Transverse colon (tissue), 4 donors: ENCODE measurements at regions of chr19 and their contacts with region 1.

Region 1: DNA sequence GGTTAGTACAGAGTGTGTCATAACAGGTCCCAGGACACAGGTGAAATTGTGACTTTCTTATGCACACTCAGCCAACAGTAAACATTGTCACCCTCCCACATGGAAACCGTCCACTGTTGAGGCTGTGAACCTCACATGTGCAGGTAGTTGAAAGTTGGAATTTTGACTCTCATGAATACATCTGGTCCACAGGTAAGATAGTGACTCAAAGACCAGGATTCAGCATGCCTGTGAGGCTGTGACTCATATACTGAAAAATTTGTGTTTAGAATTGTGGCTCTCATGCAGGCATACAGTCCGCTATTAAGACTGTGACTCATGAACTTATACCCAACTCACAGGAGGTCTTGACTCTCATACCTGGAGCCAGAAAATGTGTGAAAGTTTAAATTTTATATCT is 67.8 kb downstream of the ZNF728 start:
- DNase-seq: no peak
- H3K4me3 ChIP-seq: no peak overlapping the region
- H3K27ac ChIP-seq: no peak overlapping the region
- H3K4me1 ChIP-seq: no peaks in the 10 kb centered on the region
- H3K27me3 ChIP-seq: no peaks in the 10 kb centered on the region
- CTCF ChIP-seq: no peak
- EP300 ChIP-seq: no peak
- POLR2A ChIP-seq: no peak

Region 2: DNA sequence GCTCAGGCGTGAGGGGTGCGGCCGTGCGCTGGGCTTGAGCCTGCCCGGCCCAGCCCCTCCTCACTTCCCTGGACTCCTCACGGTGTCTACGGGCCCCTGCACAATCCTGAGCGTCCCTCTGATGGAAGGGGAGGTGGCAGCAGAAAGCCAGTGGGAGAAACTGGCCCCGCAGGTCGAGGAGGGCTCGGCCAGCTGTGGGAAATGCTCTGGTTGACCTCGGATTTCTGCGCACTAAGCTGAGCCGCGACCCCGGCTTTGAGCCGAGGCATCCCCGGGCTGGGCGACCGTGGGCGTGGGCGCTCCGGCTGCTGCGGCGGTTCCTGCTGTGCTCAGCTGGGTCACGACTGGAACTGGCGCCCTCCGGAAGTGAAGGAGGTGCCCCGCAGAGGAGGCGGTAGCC is 994.5 kb before region 1 on chr19:
- in situ Hi-C with region 1: loop called (anchors 5 kb)
- intact Hi-C with region 1: no loop called
- DNase-seq: no peak
- H3K4me3 ChIP-seq: no peak overlapping the region
- H3K27ac ChIP-seq: no peak overlapping the region
- H3K4me1 ChIP-seq: no peaks in the 10 kb centered on the region
- H3K27me3 ChIP-seq: no peaks in the 10 kb centered on the region
- CTCF ChIP-seq: no peak
- EP300 ChIP-seq: no peak
- POLR2A ChIP-seq: no peak

Region 3: DNA sequence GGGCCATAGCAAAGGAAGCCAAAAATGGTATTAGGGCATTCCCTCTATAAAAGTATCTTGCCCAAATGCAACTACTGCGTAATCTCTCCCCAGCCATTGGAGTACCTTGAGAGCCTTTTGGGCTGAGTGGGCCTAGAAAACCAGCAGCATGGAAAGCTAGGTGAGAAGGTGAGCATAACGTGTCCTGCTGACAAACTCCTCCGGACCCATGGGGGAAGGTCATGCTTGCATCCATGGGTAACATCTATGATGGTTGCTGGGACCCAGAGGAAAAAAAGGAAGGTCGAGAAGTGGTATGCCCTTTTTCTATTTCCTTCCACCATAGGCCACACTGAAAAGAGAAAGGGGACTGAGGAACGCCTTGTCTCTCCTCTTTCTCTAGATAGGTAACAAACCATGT is 10.4 kb after region 1 on chr19:
- in situ Hi-C with region 1: no loop called
- intact Hi-C with region 1: loop called (anchors 1 kb)
- DNase-seq: no peak
- H3K4me3 ChIP-seq: no peak overlapping the region
- H3K27ac ChIP-seq: no peak overlapping the region
- H3K4me1 ChIP-seq: no peaks in the 10 kb centered on the region
- H3K27me3 ChIP-seq: no peaks in the 10 kb centered on the region
- CTCF ChIP-seq: no peak
- EP300 ChIP-seq: no peak
- POLR2A ChIP-seq: no peak